ENCODE measurements at regions of chr2 and their contacts with region 1.

Region 1: GRCh38 chr2:7845332-7845731 is 836.5 kb upstream of the ID2 start:
- DNase-seq: no peak
- H3K4me3 Mint-ChIP-seq: no peak overlapping the region
- H3K27ac Mint-ChIP-seq: no peak overlapping the region
- H3K4me1 Mint-ChIP-seq: peaks cover 36% of the 10 kb centered on the region
- H3K27me3 Mint-ChIP-seq: peaks cover 7% of the 10 kb centered on the region

Region 2: DNA sequence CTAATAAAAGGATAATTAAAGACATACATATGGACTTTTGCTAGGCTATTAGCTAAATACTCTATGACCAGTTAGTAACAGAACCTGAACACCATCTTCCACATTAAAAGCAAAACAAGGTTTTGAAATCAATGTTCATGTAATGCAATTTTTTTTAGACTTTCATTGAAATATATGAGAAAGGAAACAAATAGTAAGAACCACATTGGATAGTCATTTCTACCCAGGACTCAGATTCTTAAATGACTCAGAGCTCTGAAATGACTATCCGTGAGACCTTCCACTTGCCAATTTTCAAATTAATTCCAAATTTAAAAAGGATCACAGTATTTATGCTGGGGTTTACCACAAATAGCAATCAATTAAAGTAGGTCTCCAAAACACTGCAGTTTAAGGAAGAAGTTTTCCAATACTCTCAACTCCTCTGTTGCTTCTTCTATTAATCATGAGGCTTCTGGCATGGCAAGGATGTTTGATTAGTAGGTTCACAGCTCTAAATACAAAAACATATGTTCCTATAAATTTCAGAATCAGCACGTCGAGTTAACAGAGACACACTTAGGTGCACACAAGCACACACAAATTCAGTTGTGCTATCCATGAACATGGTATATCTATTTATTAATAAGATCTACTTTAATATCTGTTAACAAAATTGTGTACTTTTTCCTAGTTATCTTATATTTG is 87.1 kb before region 1 on chr2:
- CTCF ChIA-PET with region 1: no interaction called
- POLR2A ChIA-PET with region 1: interaction called, 5 read pairs
- intact Hi-C with region 1: loop called (anchors 5 kb)
- DNase-seq: no peak
- H3K4me3 Mint-ChIP-seq: no peak overlapping the region
- H3K27ac Mint-ChIP-seq: no peak overlapping the region
- H3K4me1 Mint-ChIP-seq: peaks cover 18% of the 10 kb centered on the region
- H3K27me3 Mint-ChIP-seq: peaks cover 20% of the 10 kb centered on the region

Region 3: GRCh38 chr2:7773362-7774360 is 71.7 kb before region 1 on chr2:
- CTCF ChIA-PET with region 1: interaction called, 3 read pairs
- POLR2A ChIA-PET with region 1: interaction called, 3 read pairs
- intact Hi-C with region 1: loop called (anchors 1 kb)
- DNase-seq: peak; percentile 65
- H3K4me3 Mint-ChIP-seq: no peak overlapping the region
- H3K27ac Mint-ChIP-seq: peak overlapping the region; percentile 66
- H3K4me1 Mint-ChIP-seq: peaks cover 33% of the 10 kb centered on the region
- H3K27me3 Mint-ChIP-seq: peaks cover 12% of the 10 kb centered on the region

Region 4: GRCh38 chr2:7857904-7858303 is 12.6 kb after region 1 on chr2:
- CTCF ChIA-PET with region 1: no interaction called
- POLR2A ChIA-PET with region 1: no interaction called
- intact Hi-C with region 1: loop called (anchors 1 kb)
- DNase-seq: no peak
- H3K4me3 Mint-ChIP-seq: no peak overlapping the region
- H3K27ac Mint-ChIP-seq: no peak overlapping the region
- H3K4me1 Mint-ChIP-seq: peaks cover 8% of the 10 kb centered on the region
- H3K27me3 Mint-ChIP-seq: peaks cover 3% of the 10 kb centered on the region

Region 5: DNA sequence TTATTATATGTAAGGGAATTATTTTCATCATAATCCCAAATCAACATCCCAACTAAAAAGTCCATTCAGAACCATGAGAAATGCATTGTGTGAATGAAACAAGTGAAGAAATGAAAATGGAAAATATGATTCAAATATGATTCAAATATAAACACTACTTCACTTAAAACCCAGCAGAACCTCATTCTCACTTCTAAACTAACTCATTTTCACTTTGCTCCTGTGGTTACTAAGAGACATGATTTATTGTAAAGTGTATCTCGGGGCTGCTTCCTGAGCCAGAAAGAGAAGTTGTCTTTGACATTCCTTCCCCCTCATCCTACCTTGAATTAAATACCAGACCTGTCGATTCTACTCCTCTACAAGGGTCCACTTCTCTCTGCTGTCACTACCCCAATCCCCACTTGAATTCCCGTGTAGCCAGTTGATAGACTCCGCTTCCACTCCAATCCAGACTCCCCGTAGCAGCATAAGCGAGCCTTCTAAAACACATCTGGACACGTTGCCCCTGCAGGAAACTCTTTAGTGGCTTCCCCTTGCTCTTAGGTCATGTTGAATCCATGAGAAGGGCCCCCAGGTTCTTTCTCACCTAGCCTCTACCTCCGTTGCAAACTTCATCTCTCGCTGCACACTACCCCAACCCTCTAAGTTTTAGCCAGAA is 139.5 kb after region 1 on chr2:
- CTCF ChIA-PET with region 1: no interaction called
- POLR2A ChIA-PET with region 1: no interaction called
- intact Hi-C with region 1: loop called (anchors 1 kb)
- DNase-seq: no peak
- H3K4me3 Mint-ChIP-seq: no peak overlapping the region
- H3K27ac Mint-ChIP-seq: peak overlapping the region; percentile 66
- H3K4me1 Mint-ChIP-seq: peaks cover 28% of the 10 kb centered on the region
- H3K27me3 Mint-ChIP-seq: peaks cover 5% of the 10 kb centered on the region

Region 6: DNA sequence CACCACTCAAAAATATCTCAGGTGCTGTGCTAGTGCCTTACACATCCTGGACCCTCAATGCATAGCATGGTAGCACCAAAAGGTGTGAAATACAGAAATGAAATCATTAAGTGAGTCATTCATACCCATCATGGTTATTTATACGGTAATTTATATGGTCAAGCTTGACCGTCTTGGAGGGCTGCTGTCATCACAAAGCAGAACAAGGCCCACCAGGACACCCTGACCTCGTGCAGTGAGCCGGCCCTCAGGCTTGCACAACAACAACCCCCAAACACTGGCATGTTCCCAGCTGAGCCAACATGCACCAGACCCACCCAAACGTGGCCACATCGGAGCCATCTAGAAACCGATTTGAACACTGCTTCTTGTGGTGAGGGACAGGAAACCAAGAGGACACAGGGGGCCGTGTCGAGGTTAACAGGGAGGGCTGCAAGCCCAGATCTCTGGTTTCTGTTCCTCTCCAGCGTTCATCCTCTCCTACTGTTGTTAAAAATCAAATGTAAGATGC is 458.0 kb after region 1 on chr2:
- CTCF ChIA-PET with region 1: no interaction called
- POLR2A ChIA-PET with region 1: no interaction called
- intact Hi-C with region 1: loop called (anchors 10 kb)
- DNase-seq: peak; percentile 81
- H3K4me3 Mint-ChIP-seq: no peak overlapping the region
- H3K27ac Mint-ChIP-seq: peak overlapping the region; percentile 16
- H3K4me1 Mint-ChIP-seq: peaks cover 62% of the 10 kb centered on the region
- H3K27me3 Mint-ChIP-seq: peaks cover 6% of the 10 kb centered on the region